SK-N-SH (cell line): ENCODE measurements at regions of chr10 and their contacts with region 1.

Region 1: DNA sequence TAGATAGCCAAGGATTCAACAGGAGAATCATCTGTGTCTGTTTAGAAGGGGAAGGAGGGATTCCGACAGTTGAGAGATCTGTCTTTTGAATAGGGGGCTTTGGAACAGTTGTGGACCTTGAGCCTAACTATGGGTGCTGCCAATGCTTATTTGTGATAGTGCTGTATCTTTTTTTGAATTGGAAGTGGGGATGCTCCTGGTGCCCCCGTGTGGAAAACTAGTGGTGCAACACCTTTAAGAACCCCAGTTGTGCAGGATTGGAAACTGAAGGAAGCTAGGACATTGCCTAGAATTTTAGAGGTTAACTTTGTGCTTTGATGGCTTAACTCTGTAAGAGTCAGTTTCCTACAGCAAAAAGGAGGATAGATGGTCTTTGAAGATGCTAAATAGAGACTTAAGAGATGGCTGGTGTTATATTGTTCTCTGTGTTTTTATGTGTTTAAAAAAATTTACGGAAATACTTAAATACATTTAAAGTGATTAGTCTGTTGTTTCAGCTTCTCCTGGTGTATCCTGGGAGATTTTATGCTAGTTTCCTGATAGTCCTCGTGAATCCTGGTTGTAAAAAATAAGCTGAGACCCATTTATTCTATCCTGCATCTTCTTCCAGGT is 69.3 kb downstream of the AP3M1 start:
- DNase-seq: peak; percentile 70
- H3K4me3 ChIP-seq: no peak overlapping the region; a peak in 1 of 4 replicates
- H3K27ac ChIP-seq: peak overlapping the region; percentile 75 to 82; a peak in 3 of 4 replicates
- H3K4me1 ChIP-seq: peaks cover 2 to 57% of the 10 kb centered on the region in 2 experiments; a peak in 3 of 4 replicates
- H3K27me3 ChIP-seq: no peaks in the 10 kb centered on the region
- CTCF ChIP-seq: peak; percentile 85
- EP300 ChIP-seq: no peak
- RAD21 ChIP-seq: peak; percentile 83

Region 2: GRCh38 chr10:73886085-73886529 is 195.2 kb before region 1 on chr10:
- CTCF ChIA-PET with region 1: interaction called, 102 read pairs
- POLR2A ChIA-PET with region 1: interaction called, 4 read pairs
- DNase-seq: peak; percentile 83
- H3K4me3 ChIP-seq: peak overlapping the region in 1 of 2 experiments; percentile 27; a peak in 1 of 4 replicates
- H3K27ac ChIP-seq: peak overlapping the region; percentile 84 to 98; a peak in 3 of 4 replicates
- H3K4me1 ChIP-seq: peaks cover 22 to 31% of the 10 kb centered on the region in 2 experiments; a peak in 3 of 4 replicates
- H3K27me3 ChIP-seq: no peaks in the 10 kb centered on the region
- CTCF ChIP-seq: peak; percentile 90
- EP300 ChIP-seq: no peak
- RAD21 ChIP-seq: peak; percentile 95

Region 3: DNA sequence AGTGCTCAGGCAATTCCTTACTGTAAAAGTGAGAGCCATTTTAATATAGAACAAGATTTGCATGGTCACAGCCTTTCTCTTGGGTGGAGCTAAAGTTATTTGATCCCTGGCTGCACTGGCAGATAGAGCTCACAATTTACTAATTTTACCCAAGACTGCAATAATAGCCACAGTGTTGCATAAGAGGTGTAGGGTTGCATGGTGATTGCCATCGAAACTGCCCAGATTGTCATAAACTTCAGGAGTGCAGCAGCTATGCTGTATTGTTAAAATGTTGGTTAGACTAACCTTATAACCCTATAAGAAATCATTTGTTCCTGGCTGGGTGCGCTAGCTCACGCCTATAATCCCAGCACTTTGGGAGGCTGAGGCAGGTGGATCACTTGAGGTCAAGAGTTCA is 33.4 kb before region 1 on chr10:
- CTCF ChIA-PET with region 1: interaction called, 23 read pairs
- POLR2A ChIA-PET with region 1: no interaction called
- DNase-seq: no peak
- H3K4me3 ChIP-seq: no peak overlapping the region
- H3K27ac ChIP-seq: peak overlapping the region; percentile 60 to 83; a peak in 3 of 4 replicates
- H3K4me1 ChIP-seq: peaks cover 0 to 34% of the 10 kb centered on the region in 2 experiments; a peak in 2 of 4 replicates
- H3K27me3 ChIP-seq: no peaks in the 10 kb centered on the region
- CTCF ChIP-seq: no peak
- EP300 ChIP-seq: no peak
- RAD21 ChIP-seq: no peak

Region 4: GRCh38 chr10:74096777-74097176 is 15.5 kb after region 1 on chr10:
- CTCF ChIA-PET with region 1: interaction called, 50 read pairs
- POLR2A ChIA-PET with region 1: no interaction called
- DNase-seq: no peak
- H3K4me3 ChIP-seq: no peak overlapping the region
- H3K27ac ChIP-seq: no peak overlapping the region
- H3K4me1 ChIP-seq: peaks cover 0 to 4% of the 10 kb centered on the region in 2 experiments; a peak in 1 of 4 replicates
- H3K27me3 ChIP-seq: no peaks in the 10 kb centered on the region
- CTCF ChIP-seq: no peak
- EP300 ChIP-seq: no peak
- RAD21 ChIP-seq: no peak